ENCODE measurements at regions of chr2 and their contacts with region 1.

Region 1: DNA sequence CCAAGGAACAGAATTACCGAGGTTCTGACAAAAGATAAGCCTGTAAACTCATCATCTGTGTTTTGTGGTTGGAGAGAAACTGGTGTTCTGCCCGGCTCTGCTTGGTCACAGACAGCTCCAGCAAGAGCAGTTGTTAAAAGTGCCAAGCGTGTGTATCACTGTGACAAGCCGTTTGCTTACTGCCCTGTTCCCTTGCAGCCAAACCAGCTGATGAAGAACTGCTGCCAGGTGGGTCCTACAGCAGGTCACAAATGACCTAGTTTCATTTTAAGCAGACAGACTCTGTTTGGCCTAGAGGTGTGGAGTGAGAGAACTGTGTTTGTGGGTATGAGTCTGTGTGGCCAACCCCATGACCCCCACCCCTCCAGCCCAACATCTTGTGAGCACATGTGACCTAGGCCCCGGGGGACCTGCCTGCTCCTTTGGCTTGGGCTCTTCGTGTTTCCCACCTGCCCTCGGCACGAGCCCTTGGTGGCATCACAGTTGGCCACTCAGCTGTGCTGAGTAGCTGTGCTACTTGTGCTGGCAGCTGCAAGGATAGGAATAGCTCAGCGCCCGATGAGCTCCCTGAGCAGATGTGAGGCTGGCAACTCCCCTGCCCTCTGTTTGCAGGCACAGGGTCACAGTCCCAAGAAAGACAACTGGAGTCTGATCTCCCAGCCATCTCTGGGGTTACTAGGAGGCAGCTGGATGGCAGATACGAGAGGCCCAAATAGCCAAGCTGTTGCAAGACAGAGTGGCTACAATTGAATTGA is 9.7 kb downstream of the OXER1 start:
- DNase-seq: no peak
- H3K4me3 ChIP-seq: no peak overlapping the region
- H3K27ac ChIP-seq: no peak overlapping the region
- H3K4me1 ChIP-seq: no peaks in the 10 kb centered on the region
- H3K27me3 ChIP-seq: no peaks in the 10 kb centered on the region
- CTCF ChIP-seq: no peak
- EP300 ChIP-seq: no peak
- POLR2A ChIP-seq: no peak
- RAD21 ChIP-seq: no peak

Region 2: DNA sequence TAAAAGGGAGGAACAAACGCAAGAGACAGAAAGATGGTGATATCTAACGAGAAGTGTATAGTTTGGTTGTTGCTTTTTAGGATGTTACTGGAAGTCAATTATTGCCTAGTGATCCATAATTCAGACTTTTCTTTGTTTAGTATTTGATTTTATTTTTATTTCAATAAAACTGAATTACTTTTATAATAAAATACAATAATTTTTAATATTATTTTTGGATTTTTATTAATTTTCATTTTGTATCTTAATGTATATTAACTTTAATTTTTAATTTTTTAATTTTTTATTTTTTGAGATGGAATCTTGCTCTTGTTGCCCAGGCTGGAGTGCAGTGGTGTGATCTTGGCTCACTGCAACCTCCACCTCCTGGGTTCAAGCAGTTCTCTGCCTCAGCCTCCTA is 130.2 kb before region 1 on chr2:
- CTCF ChIA-PET with region 1: no interaction called
- POLR2A ChIA-PET with region 1: no interaction called
- DNase-seq: no peak
- H3K4me3 ChIP-seq: no peak overlapping the region
- H3K27ac ChIP-seq: no peak overlapping the region
- H3K4me1 ChIP-seq: peaks cover 0 to 4% (median 3%) of the 10 kb centered on the region in 4 experiments; a peak in 4 of 7 replicates
- H3K27me3 ChIP-seq: no peaks in the 10 kb centered on the region
- CTCF ChIP-seq: no peak
- EP300 ChIP-seq: no peak
- POLR2A ChIP-seq: no peak
- RAD21 ChIP-seq: no peak

Region 3: GRCh38 chr2:42770288-42771131 is 16.3 kb after region 1 on chr2:
- CTCF ChIA-PET with region 1: interaction called, 35 read pairs
- POLR2A ChIA-PET with region 1: interaction called, 4 read pairs
- DNase-seq: peak; percentile 44 to 72
- H3K4me3 ChIP-seq: no peak overlapping the region
- H3K27ac ChIP-seq: no peak overlapping the region
- H3K4me1 ChIP-seq: peaks cover 1 to 16% (median 6%) of the 10 kb centered on the region in 4 experiments; a peak in 4 of 7 replicates
- H3K27me3 ChIP-seq: no peaks in the 10 kb centered on the region
- CTCF ChIP-seq: peak in 2 of 3 experiments; percentile 93 to 99; a peak in 3 of 4 replicates
- EP300 ChIP-seq: no peak
- POLR2A ChIP-seq: no peak
- RAD21 ChIP-seq: peak; percentile 78 to 84